Activated CD8-positive, alpha-beta T cell treated with anti-CD3 and anti-CD28 coated beads, Interleukin-2, amount 10 ng/mL, durations not matched to agents 7 days and 5 days (primary cell): ENCODE measurements at regions of chr12 and their contacts with region 1.

Region 1: GRCh38 chr12:47397664-47398281 is 308.1 kb downstream of the RPAP3 start:
- DNase-seq: peak; percentile 68
- ATAC-seq: peak; percentile 86
- H3K4me3 Mint-ChIP-seq: peak overlapping the region; percentile 24
- H3K27ac Mint-ChIP-seq: peak overlapping the region; percentile 82
- H3K4me1 Mint-ChIP-seq: peaks cover 65% of the 10 kb centered on the region
- H3K27me3 Mint-ChIP-seq: no peaks in the 10 kb centered on the region

Region 2: DNA sequence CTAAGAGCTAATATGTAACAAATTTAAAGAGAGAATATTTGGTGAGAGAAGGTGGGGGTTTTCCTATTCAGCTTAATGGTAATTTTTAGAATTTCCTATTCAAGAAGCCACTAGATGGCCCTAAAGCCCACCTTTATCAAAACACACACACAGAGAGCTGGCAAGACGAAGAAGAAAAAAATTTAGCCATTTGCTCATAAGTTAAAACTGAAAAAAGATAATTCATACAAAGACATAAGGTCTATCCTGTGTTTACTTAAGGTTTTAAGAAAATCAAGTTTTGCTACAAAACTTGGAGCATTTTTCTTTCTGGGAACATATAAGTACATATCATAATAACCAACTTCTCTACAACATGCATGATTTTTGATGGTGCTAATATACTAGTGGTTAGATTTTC is 365.1 kb before region 1 on chr12:
- CTCF ChIA-PET with region 1: interaction called, 79 read pairs
- POLR2A ChIA-PET with region 1: no interaction called
- DNase-seq: peak; percentile 38
- ATAC-seq: no peak
- H3K4me3 Mint-ChIP-seq: no peak overlapping the region
- H3K27ac Mint-ChIP-seq: no peak overlapping the region
- H3K4me1 Mint-ChIP-seq: peaks cover 11% of the 10 kb centered on the region
- H3K27me3 Mint-ChIP-seq: peaks cover 2% of the 10 kb centered on the region

Region 3: GRCh38 chr12:47190271-47190750 is 207.5 kb before region 1 on chr12:
- CTCF ChIA-PET with region 1: interaction called, 45 read pairs
- POLR2A ChIA-PET with region 1: no interaction called
- DNase-seq: no peak
- ATAC-seq: no peak
- H3K4me3 Mint-ChIP-seq: no peak overlapping the region
- H3K27ac Mint-ChIP-seq: peak overlapping the region; percentile 66
- H3K4me1 Mint-ChIP-seq: peaks cover 70% of the 10 kb centered on the region
- H3K27me3 Mint-ChIP-seq: no peaks in the 10 kb centered on the region

Region 4: DNA sequence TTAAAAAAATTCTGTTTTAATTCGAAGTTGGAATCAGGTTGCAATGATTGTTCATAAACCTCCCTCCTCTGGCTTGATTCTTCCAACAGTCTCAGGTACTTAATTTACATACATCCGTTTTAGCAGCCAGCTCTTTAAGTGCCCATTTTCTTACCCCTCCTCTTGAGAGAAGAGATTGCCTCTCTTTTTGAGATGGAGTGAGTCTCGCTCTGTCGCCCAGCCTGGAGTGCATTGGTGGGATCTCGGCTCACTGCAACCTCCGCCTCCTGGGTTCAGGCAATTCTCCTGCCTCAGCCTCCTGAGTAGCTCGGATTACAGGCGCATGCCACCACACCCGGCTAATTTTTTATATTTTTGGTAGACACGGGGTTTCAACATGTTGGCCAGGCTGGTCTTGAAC is 171.6 kb before region 1 on chr12:
- CTCF ChIA-PET with region 1: interaction called, 23 read pairs
- POLR2A ChIA-PET with region 1: interaction called, 6 read pairs
- DNase-seq: no peak
- ATAC-seq: no peak
- H3K4me3 Mint-ChIP-seq: no peak overlapping the region
- H3K27ac Mint-ChIP-seq: peak overlapping the region; percentile 18
- H3K4me1 Mint-ChIP-seq: peaks cover 75% of the 10 kb centered on the region
- H3K27me3 Mint-ChIP-seq: no peaks in the 10 kb centered on the region

Region 5: DNA sequence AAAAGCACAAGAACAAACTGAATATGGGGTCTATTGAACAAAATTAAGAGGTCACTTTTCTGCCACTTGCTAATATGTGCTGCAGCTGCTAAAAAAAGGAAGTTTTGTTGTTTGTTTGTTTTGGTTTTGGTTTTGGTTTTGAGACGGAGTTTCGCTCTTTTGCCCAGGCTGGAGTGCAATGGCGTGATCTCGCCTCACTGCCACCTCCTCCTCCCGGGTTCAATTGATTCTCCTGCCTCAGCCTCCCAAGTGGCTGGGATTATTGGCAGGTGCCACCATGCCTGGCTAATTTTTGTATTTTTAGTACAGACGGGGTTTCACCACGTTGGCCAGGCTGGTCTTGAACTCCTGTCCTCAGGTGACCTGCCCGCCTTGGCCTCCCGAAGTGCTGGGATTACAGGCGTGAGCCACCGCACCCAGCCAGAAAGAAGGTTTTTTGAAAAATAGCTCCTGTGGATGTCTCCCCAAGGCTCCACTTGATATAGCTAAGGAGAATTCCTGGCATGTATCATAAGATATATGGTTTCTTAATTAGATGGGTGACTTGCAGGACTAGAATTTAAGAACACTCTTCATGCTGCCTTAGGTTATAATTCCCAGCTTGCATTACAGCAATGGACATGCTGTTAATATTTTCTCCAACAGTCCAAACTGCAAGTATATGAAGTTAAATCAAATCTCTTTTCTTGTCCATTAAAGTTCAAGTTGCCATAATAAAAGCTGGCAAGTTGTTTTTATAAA is 80.4 kb before region 1 on chr12:
- CTCF ChIA-PET with region 1: interaction called, 20 read pairs
- POLR2A ChIA-PET with region 1: interaction called, 3 read pairs
- DNase-seq: peak; percentile 34
- ATAC-seq: no peak
- H3K4me3 Mint-ChIP-seq: peak overlapping the region; percentile 32
- H3K27ac Mint-ChIP-seq: peak overlapping the region; percentile 62
- H3K4me1 Mint-ChIP-seq: peaks cover 41% of the 10 kb centered on the region
- H3K27me3 Mint-ChIP-seq: no peaks in the 10 kb centered on the region

Region 6: DNA sequence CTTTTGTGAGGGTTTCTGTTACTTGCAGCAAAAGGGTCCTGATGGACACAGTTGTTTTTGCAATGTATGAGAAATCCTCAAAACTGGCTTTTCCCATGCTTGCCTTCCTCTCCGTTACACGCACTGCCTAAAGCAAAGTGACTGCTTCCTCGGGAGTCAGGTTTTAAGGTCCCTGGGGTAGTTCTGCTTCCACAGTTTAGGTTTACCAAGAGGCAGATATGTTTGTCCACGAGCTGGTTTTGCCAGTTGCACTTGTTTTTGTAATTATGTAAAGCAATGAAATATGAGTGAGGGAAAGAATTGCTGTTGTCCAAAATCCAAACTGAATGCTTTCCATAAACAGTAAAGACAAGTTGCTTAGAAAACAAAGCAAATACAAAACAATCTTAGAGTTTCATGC is 27.4 kb before region 1 on chr12:
- CTCF ChIA-PET with region 1: interaction called, 53 read pairs
- POLR2A ChIA-PET with region 1: no interaction called
- DNase-seq: no peak
- ATAC-seq: no peak
- H3K4me3 Mint-ChIP-seq: no peak overlapping the region
- H3K27ac Mint-ChIP-seq: no peak overlapping the region
- H3K4me1 Mint-ChIP-seq: peaks cover 9% of the 10 kb centered on the region
- H3K27me3 Mint-ChIP-seq: no peaks in the 10 kb centered on the region